Naive thymus-derived CD8-positive, alpha-beta T cell (primary cell): ENCODE measurements at regions of chr7 and their contacts with region 1.

Region 1: DNA sequence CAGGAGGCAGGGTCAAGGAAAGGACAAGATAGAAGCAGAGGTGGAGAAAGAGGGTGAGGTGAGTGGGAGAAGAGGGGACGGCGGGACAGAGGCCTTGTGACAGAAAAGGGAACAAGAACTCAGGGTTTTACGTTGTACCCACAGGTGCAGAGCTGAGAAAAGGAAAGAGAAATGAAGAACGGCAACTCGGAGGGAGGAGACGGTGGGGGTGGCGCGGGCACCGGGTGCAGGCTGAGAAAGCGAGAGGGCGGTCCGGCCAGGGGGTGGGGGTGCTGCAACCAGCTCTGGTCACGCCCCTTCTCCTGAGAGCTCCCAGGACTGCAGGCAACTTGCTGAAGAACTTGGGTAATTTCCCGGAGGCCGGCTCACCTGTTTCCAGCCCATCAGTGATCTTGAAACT is 65.3 kb downstream of the CARD11 start:
- DNase-seq: peak; percentile 45 to 78 (median 62)
- ATAC-seq: peak; percentile 49 to 64
- H3K4me3 Mint-ChIP-seq: peak overlapping the region; percentile 80 to 93 (median 88)
- H3K27ac Mint-ChIP-seq: peak overlapping the region; percentile 85 to 99 (median 95)
- H3K4me1 Mint-ChIP-seq: peaks cover 47 to 85% (median 78%) of the 10 kb centered on the region in 4 donors
- H3K27me3 Mint-ChIP-seq: no peaks in the 10 kb centered on the region

Region 2: GRCh38 chr7:2954433-2954853 is 24.0 kb before region 1 on chr7:
- POLR2A ChIA-PET with region 1: interaction called, 22 read pairs
- DNase-seq: peak in 4 of 10 donors; percentile 30 to 62 (median 31)
- ATAC-seq: peak; percentile 48 to 64
- H3K4me3 Mint-ChIP-seq: peak overlapping the region; percentile 37 to 80 (median 60)
- H3K27ac Mint-ChIP-seq: peak overlapping the region; percentile 61 to 94 (median 92)
- H3K4me1 Mint-ChIP-seq: peaks cover 27 to 85% (median 69%) of the 10 kb centered on the region in 4 donors
- H3K27me3 Mint-ChIP-seq: no peaks in the 10 kb centered on the region

Region 3: GRCh38 chr7:2968176-2968575 is 10.2 kb before region 1 on chr7:
- POLR2A ChIA-PET with region 1: interaction called, 18 read pairs
- DNase-seq: no peak
- ATAC-seq: no peak
- H3K4me3 Mint-ChIP-seq: peak overlapping the region in 1 of 10 donors; percentile 8
- H3K27ac Mint-ChIP-seq: peak overlapping the region in 5 of 10 donors; percentile 13 to 32 (median 21)
- H3K4me1 Mint-ChIP-seq: peaks cover 17 to 30% (median 24%) of the 10 kb centered on the region in 4 donors
- H3K27me3 Mint-ChIP-seq: no peaks in the 10 kb centered on the region